Activated B cell treated with CpG ODN at 0.5 μM for 24 hours (primary cell): ENCODE measurements at regions of chr1 and their contacts with region 1.

Region 1: DNA sequence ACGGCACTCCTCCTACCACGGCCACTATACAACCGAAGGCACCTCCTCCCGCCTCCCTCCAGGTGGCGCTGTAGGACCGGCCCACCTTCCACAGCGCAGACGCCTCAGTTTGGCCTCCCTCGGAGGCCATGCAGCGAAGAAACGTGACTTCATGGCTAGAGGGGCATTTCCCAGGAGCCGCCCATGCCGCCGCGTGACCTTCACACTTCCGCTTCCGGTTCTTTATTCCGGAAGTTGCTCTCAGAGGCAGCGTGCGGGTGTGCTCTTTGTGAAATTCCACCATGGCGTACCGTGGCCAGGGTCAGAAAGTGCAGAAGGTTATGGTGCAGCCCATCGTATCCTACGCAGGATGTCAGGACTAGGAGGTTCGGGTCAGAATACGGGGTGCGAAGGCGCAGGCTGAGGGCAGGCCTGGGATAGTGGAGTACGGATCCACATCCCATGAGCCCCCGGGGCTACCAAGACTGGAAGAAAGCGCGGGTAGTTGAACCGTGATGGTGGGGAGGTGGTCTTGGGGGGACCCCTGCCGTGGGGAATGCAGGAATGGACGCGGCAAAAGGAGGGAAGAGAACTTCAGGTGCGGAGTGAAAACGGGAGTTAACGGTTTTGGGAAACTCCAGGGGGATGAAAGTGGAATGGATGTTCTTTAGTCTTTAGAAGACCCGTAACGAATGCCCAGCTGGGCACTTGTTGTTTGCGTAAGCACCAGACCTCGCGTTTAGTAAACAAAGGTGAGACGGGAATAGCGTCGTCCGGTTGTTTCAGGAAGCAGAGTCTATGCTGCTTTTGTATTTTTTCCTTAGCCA is at the start of gene SNRPE:
- DNase-seq: peak; percentile 92
- ATAC-seq: peak; percentile 98
- H3K4me3 Mint-ChIP-seq: peak within 1 kb of the TSS; percentile 97
- H3K27ac Mint-ChIP-seq: peak within 1 kb of the TSS; percentile 98
- H3K4me1 Mint-ChIP-seq: peaks cover 24% of the 10 kb centered on the region
- H3K27me3 Mint-ChIP-seq: no peaks in the 10 kb centered on the region
- CTCF ChIP-seq: no peak
- total RNA-seq, gene SNRPE: 149 and 156 TPM in 2 replicates

Region 2: DNA sequence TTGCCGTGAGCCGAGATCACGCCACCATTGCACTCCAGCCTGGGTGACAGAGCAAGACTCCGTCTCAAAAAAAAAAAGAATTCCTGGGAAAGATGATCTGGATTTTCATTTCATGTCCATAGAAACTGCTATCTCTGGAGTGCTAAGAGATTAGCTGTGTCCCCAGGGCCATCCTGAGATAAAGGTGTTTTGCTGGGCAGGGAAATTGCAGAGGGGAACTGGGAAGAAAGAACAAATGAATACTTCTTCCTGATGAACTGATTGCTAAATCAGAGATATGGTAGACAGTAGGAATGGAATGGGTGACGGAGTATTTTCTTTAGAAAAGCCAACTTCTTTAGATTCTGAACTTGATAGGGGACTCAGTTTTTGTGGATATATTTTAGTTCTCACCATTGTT is 19.0 kb after region 1 on chr1:
- CTCF ChIA-PET with region 1: no interaction called
- POLR2A ChIA-PET with region 1: no interaction called
- intact Hi-C with region 1: no loop called
- DNase-seq: no peak
- ATAC-seq: no peak
- H3K4me3 Mint-ChIP-seq: no peak overlapping the region
- H3K27ac Mint-ChIP-seq: no peak overlapping the region
- H3K4me1 Mint-ChIP-seq: no peaks in the 10 kb centered on the region
- H3K27me3 Mint-ChIP-seq: no peaks in the 10 kb centered on the region
- CTCF ChIP-seq: no peak

Region 3: GRCh38 chr1:204128964-204129896 is 267.6 kb after region 1 on chr1:
- CTCF ChIA-PET with region 1: interaction called, 28 read pairs
- POLR2A ChIA-PET with region 1: interaction called, 9 read pairs
- intact Hi-C with region 1: loop called (anchors 1 kb)
- DNase-seq: peak; percentile 41
- ATAC-seq: peak; percentile 89
- H3K4me3 Mint-ChIP-seq: no peak overlapping the region
- H3K27ac Mint-ChIP-seq: no peak overlapping the region
- H3K4me1 Mint-ChIP-seq: peaks cover 8% of the 10 kb centered on the region
- H3K27me3 Mint-ChIP-seq: peaks cover 7% of the 10 kb centered on the region
- CTCF ChIP-seq: no peak

Region 4: GRCh38 chr1:204207136-204207616 is 345.6 kb after region 1 on chr1:
- CTCF ChIA-PET with region 1: no interaction called
- POLR2A ChIA-PET with region 1: interaction called, 8 read pairs
- intact Hi-C with region 1: loop called (anchors 1 kb)
- DNase-seq: peak; percentile 62
- ATAC-seq: peak; percentile 88
- H3K4me3 Mint-ChIP-seq: no peak overlapping the region
- H3K27ac Mint-ChIP-seq: no peak overlapping the region
- H3K4me1 Mint-ChIP-seq: no peaks in the 10 kb centered on the region
- H3K27me3 Mint-ChIP-seq: peaks cover 23% of the 10 kb centered on the region
- CTCF ChIP-seq: no peak

Region 5: DNA sequence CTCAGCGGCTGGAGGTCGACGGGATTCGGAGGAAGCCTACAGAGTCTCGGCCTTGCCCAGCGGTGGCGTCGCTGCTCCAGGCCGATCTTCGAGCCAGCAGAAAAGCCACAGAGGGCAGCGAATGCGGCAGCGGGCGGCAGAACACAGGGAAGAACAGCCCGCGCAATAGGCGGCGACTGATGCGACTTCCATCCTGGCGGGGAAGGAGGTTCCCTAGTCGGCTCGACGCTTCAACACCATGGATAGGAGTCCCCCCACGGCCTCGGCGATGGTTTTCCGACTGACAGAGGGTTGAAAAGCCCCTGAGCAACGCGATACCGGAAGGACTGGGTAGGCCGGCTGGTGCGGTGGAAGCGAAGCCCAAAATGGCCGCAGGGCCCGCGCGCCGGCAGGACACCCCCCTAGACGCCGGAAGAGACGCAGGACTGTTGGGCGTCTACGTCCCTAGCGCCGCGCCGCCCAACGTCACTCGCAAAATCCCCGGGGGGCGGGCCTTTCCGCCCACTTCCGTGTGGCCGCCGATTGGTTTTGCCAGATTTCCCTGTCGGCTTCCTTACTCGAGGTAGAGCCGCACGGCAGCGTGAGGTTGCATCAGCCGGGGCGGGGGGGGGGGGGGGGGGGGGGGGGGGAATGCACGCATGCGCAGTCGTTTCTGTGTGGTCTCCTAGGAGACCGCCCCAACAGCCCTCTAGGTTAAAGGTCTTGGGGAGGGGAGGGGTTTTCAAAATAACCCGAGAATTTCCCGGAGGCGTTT is 550.0 kb after region 1 on chr1 and contains the start of gene PPP1R15B:
- CTCF ChIA-PET with region 1: no interaction called
- POLR2A ChIA-PET with region 1: no interaction called
- intact Hi-C with region 1: loop called (anchors 2 kb)
- DNase-seq: peak; percentile 96
- ATAC-seq: peak; percentile 89
- H3K4me3 Mint-ChIP-seq: peak within 1 kb of the TSS; percentile 99
- H3K27ac Mint-ChIP-seq: peak within 1 kb of the TSS; percentile 99
- H3K4me1 Mint-ChIP-seq: peaks cover 29% of the 10 kb centered on the region
- H3K27me3 Mint-ChIP-seq: no peaks in the 10 kb centered on the region
- CTCF ChIP-seq: no peak
- total RNA-seq, gene PPP1R15B: 60.4 and 70.6 TPM in 2 replicates